ENCODE measurements at regions of chr18 and their contacts with region 1.

Region 1: GRCh38 chr18:3297025-3297984 is 35.4 kb downstream of the MYL12B start:
- DNase-seq: peak; percentile 81
- CTCF ChIP-seq: peak; percentile 88

Region 2: DNA sequence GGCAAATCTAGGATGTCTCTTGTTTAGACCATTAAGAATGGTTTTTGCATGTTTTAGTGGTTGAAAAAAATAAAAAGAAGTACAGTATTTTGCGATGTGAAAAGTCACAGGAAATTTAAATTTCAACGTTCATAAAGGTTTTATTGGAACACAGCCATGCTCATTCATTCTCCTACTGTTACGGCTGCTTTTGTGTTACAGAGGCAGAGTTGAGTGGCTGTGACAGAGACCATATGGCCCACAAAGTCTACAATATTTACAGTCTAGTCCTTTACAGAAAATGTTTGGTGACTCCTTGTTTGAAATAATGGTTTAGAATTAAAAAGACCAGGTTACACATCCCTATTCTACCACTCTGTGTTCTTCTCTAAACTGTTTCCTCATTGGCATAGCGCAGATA is 125.7 kb before region 1 on chr18:
- CTCF ChIA-PET with region 1: no interaction called
- POLR2A ChIA-PET with region 1: no interaction called
- DNase-seq: no peak
- CTCF ChIP-seq: no peak

Region 3: DNA sequence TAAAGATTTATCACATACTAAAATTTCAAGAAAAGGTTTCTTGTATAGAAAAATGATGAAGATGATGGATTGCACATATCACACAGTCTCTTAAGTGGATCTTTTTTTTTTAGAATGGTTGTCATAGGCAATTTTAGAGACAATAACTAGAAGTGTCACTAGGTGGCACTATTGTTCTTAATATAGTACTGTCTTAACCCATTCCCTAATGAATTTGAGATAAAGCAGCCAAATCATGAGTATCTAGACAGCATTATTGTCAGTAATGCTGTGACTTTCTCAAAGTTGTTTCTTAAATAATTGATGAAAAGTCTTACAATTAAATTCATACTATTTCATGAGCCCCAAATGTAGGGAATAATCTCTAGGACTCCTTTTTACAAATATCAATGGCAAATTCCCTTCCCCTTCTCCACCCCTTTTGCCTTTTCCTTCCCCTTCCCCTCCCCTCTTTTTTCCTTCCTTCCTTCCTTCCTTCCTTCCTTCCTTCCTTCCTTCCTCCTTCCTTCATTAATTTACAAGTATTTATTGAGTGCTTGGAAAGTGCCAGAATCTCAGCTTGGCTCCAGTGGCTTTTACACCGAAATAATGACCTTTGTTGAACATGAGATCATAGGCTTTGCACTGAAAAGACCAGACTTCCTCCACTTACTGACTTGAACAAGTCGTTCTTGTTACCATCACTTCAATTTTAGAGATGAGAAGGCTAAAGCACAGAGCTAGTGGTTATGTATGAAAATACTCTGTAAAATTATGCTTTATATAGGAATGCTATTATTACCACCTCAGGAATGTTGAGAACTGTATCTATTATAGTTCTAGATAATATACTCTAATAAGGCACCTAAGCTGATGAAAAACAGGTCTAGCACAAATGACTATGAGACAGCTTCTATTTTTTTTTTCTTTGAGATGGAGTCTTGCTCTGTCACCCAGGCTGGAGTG is 15.6 kb before region 1 on chr18:
- CTCF ChIA-PET with region 1: interaction called, 109 read pairs
- POLR2A ChIA-PET with region 1: no interaction called
- DNase-seq: peak; percentile 59
- CTCF ChIP-seq: peak; percentile 61

Region 4: DNA sequence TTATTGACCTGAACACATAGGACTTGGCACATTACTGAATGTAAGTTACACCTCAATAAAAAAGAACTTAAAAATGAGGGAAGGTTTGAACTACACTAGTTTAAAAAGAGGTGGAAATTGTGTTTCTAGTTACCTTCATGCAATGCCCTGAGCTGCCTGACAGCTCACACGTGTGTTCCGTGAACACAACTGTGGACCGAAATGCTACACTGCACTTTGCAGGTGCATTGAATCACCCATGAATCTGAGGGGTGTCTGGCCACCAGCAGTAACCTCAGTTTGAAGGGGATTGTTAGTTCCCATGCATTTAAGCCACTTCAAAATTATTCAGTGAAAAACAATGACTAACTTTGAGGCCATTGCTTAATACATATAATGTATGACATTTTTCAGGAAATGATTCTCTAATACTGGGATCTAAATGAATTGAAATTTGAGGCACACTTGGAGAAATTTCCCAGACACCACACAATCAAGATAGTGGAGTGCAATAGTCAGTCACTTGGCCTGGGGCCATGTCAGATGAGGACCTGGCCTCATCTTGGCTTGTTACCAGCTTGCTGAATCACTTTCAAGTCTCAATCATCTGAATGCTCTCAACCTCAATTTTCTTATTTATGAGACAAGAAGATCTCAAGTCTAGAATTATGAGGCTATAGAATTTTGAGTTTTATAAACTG is 24.0 kb after region 1 on chr18:
- CTCF ChIA-PET with region 1: interaction called, 11 read pairs
- POLR2A ChIA-PET with region 1: no interaction called
- DNase-seq: no peak
- CTCF ChIP-seq: no peak

Region 5: DNA sequence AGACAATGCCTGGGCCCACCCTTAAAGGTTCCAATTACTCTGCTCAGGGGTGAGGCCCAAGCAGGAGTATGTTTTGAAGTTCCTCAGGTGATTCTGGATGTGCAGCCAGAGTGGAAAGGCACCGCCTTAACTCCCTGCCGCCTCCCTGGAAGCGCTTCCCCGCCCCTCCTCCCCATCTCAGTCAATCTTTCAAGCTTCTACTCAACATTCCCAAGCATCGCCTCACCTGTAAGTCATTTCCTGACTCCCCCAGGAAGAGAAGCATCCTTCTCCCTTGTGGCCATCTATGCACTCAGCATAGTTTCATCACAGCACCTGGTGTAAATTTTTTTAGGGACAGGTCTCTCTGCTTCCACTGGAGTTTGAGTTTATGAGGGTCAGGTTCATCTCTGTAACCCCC is 32.2 kb after region 1 on chr18:
- CTCF ChIA-PET with region 1: interaction called, 12 read pairs
- POLR2A ChIA-PET with region 1: no interaction called
- DNase-seq: no peak
- CTCF ChIP-seq: no peak

Measured in GM10248 (cell line).